ENCODE measurements at regions of chr6 and their contacts with region 1.

Region 1: DNA sequence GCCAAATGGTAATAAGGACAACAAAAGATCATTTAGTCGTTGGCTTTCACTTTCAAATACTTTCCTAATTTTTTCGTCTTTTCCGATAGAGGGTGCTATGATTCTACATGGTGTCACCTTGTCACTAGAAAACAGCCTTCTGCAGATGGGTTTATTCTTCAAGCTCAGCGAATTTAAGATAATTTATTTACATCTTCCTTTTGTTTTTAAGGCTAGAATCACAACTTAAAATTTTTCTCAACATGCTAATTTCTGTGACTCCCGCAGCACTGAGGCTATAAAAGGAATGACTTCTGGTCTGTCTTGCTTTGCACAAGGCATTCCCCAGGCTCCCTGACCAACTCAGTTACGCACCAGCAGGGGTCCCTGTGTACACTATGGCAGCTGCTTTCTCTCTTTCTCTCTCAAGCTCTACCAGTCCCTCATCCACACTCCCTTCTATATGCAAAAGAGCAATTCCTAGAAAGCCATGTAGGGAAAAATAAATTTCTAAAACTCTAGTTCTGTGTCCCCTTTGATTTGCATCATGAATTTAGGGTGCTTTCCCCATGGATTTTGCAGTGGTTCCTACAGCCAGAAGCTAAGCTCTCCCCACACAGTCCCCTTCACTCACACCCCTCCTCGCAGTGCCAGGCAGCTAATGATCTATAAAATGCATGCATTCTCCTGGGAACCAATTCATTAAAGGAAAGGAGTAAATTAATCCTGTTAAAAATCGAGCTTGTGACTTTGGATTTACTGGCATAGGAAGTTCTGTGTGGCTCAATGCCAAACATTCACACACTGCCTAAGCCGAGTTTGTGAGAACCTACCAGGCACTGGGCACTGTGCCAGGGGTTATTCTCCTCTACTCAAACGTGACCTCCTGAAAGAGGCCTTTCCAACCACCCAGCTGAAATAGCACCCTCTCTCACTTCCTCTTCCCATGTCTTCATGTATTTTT is 74.5 kb downstream of the DCDC2 start:
- DNase-seq: peak; percentile 89
- H3K4me3 Mint-ChIP-seq: no peak overlapping the region
- H3K27ac Mint-ChIP-seq: no peak overlapping the region
- H3K4me1 Mint-ChIP-seq: no peaks in the 10 kb centered on the region
- H3K27me3 Mint-ChIP-seq: no peaks in the 10 kb centered on the region
- CTCF ChIP-seq: peak; percentile 86

Region 2: GRCh38 chr6:24323632-24324337 is 40.5 kb after region 1 on chr6:
- CTCF ChIA-PET with region 1: interaction called, 5 read pairs
- intact Hi-C with region 1: loop called (anchors 2 kb)
- DNase-seq: no peak
- H3K4me3 Mint-ChIP-seq: peak overlapping the region; percentile 5
- H3K27ac Mint-ChIP-seq: peak overlapping the region; percentile 45
- H3K4me1 Mint-ChIP-seq: peaks cover 67% of the 10 kb centered on the region
- H3K27me3 Mint-ChIP-seq: no peaks in the 10 kb centered on the region
- CTCF ChIP-seq: no peak

Region 3: DNA sequence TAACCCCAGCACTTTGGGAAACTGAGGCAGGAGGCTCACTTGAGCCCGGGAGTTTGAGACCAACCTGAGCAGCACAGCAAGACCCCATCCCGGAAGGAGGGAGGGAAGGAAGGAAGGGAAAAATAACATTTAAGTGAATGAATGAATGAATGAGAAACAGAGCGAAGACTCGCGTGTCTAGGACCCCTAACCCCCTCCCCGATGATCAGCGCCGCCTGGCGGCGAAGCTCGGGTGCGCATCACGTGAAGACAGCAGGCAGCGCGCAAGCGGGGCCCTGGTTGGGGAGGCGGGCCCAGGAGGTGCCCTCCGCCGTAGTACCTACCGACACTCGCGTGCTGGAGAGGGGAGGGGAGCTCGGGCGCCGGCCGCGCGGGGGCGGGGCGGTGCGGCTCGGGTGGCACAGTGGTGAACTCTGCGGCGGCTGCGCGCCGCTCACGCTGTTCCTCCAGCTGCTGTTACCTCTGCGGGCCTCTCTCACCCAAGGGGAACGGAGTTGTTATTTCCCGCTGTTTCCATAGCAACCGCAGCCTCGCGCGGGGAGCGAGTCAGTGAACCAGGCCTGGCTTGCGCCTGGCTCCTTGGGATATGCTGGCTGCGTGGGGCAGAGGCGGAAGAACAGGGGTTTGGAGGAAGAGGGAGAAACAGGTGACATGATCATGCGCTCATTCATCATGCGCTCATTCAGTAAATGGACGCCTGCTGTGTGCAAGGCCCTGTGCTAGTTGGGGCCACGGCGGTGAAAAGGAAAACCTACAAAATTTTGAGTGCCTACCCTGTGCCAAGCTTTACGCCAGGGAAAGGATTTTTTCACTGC is 76.5 kb after region 1 on chr6:
- CTCF ChIA-PET with region 1: interaction called, 69 read pairs
- intact Hi-C with region 1: loop called (anchors 1 kb)
- DNase-seq: peak; percentile 99
- H3K4me3 Mint-ChIP-seq: peak overlapping the region; percentile 80
- H3K27ac Mint-ChIP-seq: peak overlapping the region; percentile 100
- H3K4me1 Mint-ChIP-seq: peaks cover 20% of the 10 kb centered on the region
- H3K27me3 Mint-ChIP-seq: no peaks in the 10 kb centered on the region
- CTCF ChIP-seq: peak; percentile 100

Region 4: GRCh38 chr6:24391756-24392405 is 108.6 kb after region 1 on chr6:
- CTCF ChIA-PET with region 1: interaction called, 121 read pairs
- intact Hi-C with region 1: loop called (anchors 1 kb)
- DNase-seq: no peak
- H3K4me3 Mint-ChIP-seq: no peak overlapping the region
- H3K27ac Mint-ChIP-seq: no peak overlapping the region
- H3K4me1 Mint-ChIP-seq: peaks cover 16% of the 10 kb centered on the region
- H3K27me3 Mint-ChIP-seq: no peaks in the 10 kb centered on the region
- CTCF ChIP-seq: no peak

Region 5: GRCh38 chr6:24504602-24505586 is 221.6 kb after region 1 on chr6:
- CTCF ChIA-PET with region 1: no interaction called
- intact Hi-C with region 1: loop called (anchors 10 kb)
- DNase-seq: peak; percentile 97
- H3K4me3 Mint-ChIP-seq: peak overlapping the region; percentile 51
- H3K27ac Mint-ChIP-seq: peak overlapping the region; percentile 81
- H3K4me1 Mint-ChIP-seq: peaks cover 33% of the 10 kb centered on the region
- H3K27me3 Mint-ChIP-seq: no peaks in the 10 kb centered on the region
- CTCF ChIP-seq: no peak